GM12878 (cell line): ENCODE measurements at regions of chr1 and their contacts with region 1.

Region 1: GRCh38 chr1:166258017-166258416 is 91.2 kb upstream of the FAM78B start:
- DNase-seq: no peak
- ATAC-seq: peak; percentile 88
- H3K4me3 ChIP-seq: no peak overlapping the region
- H3K27ac ChIP-seq: no peak overlapping the region
- H3K4me1 ChIP-seq: no peaks in the 10 kb centered on the region
- H3K27me3 ChIP-seq: no peaks in the 10 kb centered on the region
- CTCF ChIP-seq: peak; percentile 16 to 47 (median 34); a peak in 4 of 6 replicates
- EP300 ChIP-seq: no peak
- POLR2A ChIP-seq: no peak
- RAD21 ChIP-seq: peak; percentile 53

Region 2: GRCh38 chr1:166064313-166064926 is 193.6 kb before region 1 on chr1:
- CTCF ChIA-PET with region 1: no interaction called
- POLR2A ChIA-PET with region 1: no interaction called
- RAD21 ChIA-PET with region 1: no interaction called
- SMC1A ChIA-PET with region 1: no interaction called
- in situ Hi-C with region 1: no loop called
- intact Hi-C with region 1: no loop called
- DNase-seq: no peak
- ATAC-seq: no peak
- H3K4me3 ChIP-seq: no peak overlapping the region
- H3K27ac ChIP-seq: no peak overlapping the region
- H3K4me1 ChIP-seq: no peaks in the 10 kb centered on the region
- H3K27me3 ChIP-seq: no peaks in the 10 kb centered on the region
- CTCF ChIP-seq: no peak
- EP300 ChIP-seq: no peak
- POLR2A ChIP-seq: no peak
- RAD21 ChIP-seq: no peak

Region 3: GRCh38 chr1:166133276-166133841 is 124.7 kb before region 1 on chr1:
- CTCF ChIA-PET with region 1: interaction called, 12 read pairs
- POLR2A ChIA-PET with region 1: no interaction called
- RAD21 ChIA-PET with region 1: interaction called, 6 read pairs
- SMC1A ChIA-PET with region 1: interaction called, 4 read pairs
- in situ Hi-C with region 1: no loop called
- intact Hi-C with region 1: no loop called
- DNase-seq: no peak
- ATAC-seq: peak; percentile 60; the same call in 2 of the 3 replicates
- H3K4me3 ChIP-seq: no peak overlapping the region
- H3K27ac ChIP-seq: no peak overlapping the region
- H3K4me1 ChIP-seq: no peaks in the 10 kb centered on the region
- H3K27me3 ChIP-seq: no peaks in the 10 kb centered on the region
- CTCF ChIP-seq: peak; percentile 34 to 53 (median 52)
- EP300 ChIP-seq: no peak
- POLR2A ChIP-seq: no peak
- RAD21 ChIP-seq: peak; percentile 43

Region 4: GRCh38 chr1:166156674-166157073 is 101.3 kb before region 1 on chr1:
- CTCF ChIA-PET with region 1: no interaction called
- POLR2A ChIA-PET with region 1: no interaction called
- RAD21 ChIA-PET with region 1: no interaction called
- SMC1A ChIA-PET with region 1: no interaction called
- in situ Hi-C with region 1: no loop called
- intact Hi-C with region 1: no loop called
- DNase-seq: no peak
- ATAC-seq: no peak
- H3K4me3 ChIP-seq: no peak overlapping the region
- H3K27ac ChIP-seq: no peak overlapping the region
- H3K4me1 ChIP-seq: no peaks in the 10 kb centered on the region
- H3K27me3 ChIP-seq: no peaks in the 10 kb centered on the region
- CTCF ChIP-seq: no peak
- EP300 ChIP-seq: no peak
- POLR2A ChIP-seq: no peak
- RAD21 ChIP-seq: no peak

Region 5: GRCh38 chr1:166202546-166202945 is 55.5 kb before region 1 on chr1:
- CTCF ChIA-PET with region 1: no interaction called
- POLR2A ChIA-PET with region 1: no interaction called
- RAD21 ChIA-PET with region 1: no interaction called
- SMC1A ChIA-PET with region 1: interaction called, 3 read pairs
- in situ Hi-C with region 1: no loop called
- intact Hi-C with region 1: loop called (anchors 10 kb)
- DNase-seq: no peak
- ATAC-seq: no peak
- H3K4me3 ChIP-seq: no peak overlapping the region
- H3K27ac ChIP-seq: no peak overlapping the region
- H3K4me1 ChIP-seq: no peaks in the 10 kb centered on the region
- H3K27me3 ChIP-seq: no peaks in the 10 kb centered on the region
- CTCF ChIP-seq: no peak
- EP300 ChIP-seq: no peak
- POLR2A ChIP-seq: no peak
- RAD21 ChIP-seq: no peak

Region 6: GRCh38 chr1:166221316-166221715 is 36.7 kb before region 1 on chr1:
- CTCF ChIA-PET with region 1: no interaction called
- POLR2A ChIA-PET with region 1: no interaction called
- RAD21 ChIA-PET with region 1: no interaction called
- SMC1A ChIA-PET with region 1: no interaction called
- in situ Hi-C with region 1: no loop called
- intact Hi-C with region 1: no loop called
- DNase-seq: no peak
- ATAC-seq: peak; percentile 57
- H3K4me3 ChIP-seq: no peak overlapping the region
- H3K27ac ChIP-seq: no peak overlapping the region
- H3K4me1 ChIP-seq: no peaks in the 10 kb centered on the region
- H3K27me3 ChIP-seq: no peaks in the 10 kb centered on the region
- CTCF ChIP-seq: no peak
- EP300 ChIP-seq: no peak
- POLR2A ChIP-seq: no peak
- RAD21 ChIP-seq: no peak

Region 7: GRCh38 chr1:166233750-166234366 is 24.2 kb before region 1 on chr1:
- CTCF ChIA-PET with region 1: no interaction called
- POLR2A ChIA-PET with region 1: no interaction called
- RAD21 ChIA-PET with region 1: no interaction called
- SMC1A ChIA-PET with region 1: no interaction called
- in situ Hi-C with region 1: no loop called
- intact Hi-C with region 1: no loop called
- DNase-seq: no peak
- ATAC-seq: no peak
- H3K4me3 ChIP-seq: no peak overlapping the region
- H3K27ac ChIP-seq: no peak overlapping the region
- H3K4me1 ChIP-seq: no peaks in the 10 kb centered on the region
- H3K27me3 ChIP-seq: no peaks in the 10 kb centered on the region
- CTCF ChIP-seq: no peak
- EP300 ChIP-seq: no peak
- POLR2A ChIP-seq: no peak
- RAD21 ChIP-seq: no peak